ENCODE measurements at regions of chr3 and their contacts with region 1.

Region 1: DNA sequence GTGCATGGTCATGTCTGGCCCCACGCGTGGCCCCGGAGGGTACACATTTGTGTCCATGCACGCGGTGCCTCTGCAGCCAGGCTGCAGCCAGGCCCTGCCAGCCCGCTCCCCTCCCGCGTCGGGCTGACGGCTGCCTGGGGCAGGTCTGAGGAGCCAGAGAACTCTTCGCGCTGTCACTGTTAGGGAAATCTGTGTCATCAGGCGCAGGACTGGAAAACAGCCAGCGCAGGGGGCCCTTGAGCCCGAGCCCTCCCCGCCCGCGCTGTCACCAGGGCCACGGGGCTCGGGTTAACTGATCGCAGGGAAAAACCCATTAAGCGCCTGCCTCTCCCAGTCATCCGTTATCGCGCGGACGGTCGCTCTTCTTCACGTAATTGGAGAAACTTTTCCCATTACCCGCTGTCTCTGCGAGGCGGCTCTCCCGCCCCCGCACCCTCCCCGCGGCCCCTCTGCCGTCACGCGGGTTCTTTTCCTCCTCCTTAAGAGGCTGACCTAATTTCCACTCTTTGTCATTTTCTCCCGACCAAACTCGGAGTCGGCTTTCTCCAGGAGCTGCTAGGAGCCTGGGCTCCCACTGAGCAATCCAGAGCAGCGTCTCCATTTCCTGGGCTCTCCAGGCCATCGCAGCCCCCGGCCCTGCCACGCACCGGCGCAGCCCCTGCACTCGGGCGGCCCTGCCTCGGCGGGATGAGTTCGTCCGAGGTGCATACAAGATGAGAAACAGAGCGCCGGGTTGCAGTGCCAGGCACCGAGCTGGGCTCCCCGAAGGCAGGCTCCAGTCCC is 57.5 kb upstream of the PRR23E start:
- DNase-seq: peak; percentile 75

Region 2: GRCh38 chr3:126746395-126747177 is 388.8 kb before region 1 on chr3:
- intact Hi-C with region 1: loop called (anchors 5 kb)
- DNase-seq: peak; percentile 84

Region 3: DNA sequence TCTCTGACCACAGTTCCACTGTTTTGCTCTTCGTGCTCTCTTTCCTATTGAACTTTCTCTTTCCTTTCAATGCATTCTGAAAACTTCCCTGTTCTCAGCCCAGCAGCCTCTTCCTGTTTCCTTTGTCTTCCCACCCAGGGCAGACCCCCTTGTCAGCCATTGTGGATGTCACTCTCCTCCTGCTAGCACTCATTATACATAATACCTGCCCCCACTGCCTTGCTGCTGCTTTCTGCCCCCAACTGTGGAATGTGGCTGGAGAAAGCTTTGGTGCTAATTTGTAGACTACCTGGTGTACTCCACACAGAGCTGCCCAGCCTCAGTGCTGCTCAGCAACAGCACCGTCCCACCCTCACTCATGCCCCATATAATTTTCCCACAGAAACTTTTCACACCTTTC is 351.2 kb before region 1 on chr3:
- intact Hi-C with region 1: no loop called
- DNase-seq: no peak

Region 4: DNA sequence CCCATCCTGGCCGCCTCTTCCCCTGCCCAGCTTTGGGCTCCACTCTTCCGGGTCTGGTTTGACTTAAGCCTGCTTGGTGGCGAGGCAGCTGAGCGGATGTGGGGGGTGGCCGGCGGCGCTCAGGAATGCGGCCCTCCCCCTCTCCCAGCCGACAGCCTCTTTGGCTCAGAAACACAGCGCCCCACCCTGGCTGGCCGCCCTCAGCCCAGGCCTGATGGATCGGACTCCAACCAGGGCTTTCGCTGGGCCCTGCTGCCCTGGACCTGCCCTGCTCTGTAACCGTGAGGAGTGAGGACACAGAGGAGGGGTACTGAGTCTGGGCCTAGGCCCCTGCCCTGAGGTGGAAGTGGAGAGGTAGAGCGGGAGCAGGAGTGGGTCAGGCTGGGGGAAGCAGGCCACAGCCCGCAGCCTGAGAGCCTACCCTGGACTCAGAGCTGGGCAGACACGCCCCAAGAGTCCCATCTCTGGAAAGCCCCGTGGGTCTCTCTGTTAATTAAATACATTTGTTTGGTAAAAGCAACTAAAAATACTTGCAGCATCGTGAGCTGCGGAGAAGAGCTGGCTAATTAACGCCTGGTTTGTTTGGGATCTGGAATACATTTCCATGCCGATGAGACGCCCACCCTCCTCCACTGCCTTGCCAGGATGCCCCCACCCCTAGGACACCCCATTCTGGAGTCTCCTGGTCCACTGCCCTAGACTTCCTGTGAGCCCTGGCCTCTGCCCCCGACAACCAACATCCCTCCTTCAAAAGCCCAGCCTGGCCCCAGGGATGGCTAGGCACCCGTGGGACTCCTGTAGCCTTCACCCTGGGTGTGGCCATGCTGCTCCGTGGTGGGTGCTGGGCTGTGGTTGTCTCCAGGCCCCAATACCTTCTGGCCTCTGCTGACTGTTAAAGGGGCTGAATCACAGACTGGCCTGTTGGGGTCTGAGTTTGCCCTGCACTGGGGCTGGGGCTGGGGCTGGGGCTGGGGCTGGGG is 132.9 kb before region 1 on chr3:
- intact Hi-C with region 1: loop called (anchors 5 kb)
- DNase-seq: peak; percentile 93

Region 5: GRCh38 chr3:127074728-127075360 is 60.6 kb before region 1 on chr3:
- intact Hi-C with region 1: no loop called
- DNase-seq: peak; percentile 74

Region 6: GRCh38 chr3:127172781-127173515 is 37.5 kb after region 1 on chr3:
- intact Hi-C with region 1: loop called (anchors 2 kb)
- DNase-seq: peak; percentile 59

Measured in cardiac septum (tissue), 1 donor.